ENCODE measurements at regions of chr14 and their contacts with region 1.

Region 1: DNA sequence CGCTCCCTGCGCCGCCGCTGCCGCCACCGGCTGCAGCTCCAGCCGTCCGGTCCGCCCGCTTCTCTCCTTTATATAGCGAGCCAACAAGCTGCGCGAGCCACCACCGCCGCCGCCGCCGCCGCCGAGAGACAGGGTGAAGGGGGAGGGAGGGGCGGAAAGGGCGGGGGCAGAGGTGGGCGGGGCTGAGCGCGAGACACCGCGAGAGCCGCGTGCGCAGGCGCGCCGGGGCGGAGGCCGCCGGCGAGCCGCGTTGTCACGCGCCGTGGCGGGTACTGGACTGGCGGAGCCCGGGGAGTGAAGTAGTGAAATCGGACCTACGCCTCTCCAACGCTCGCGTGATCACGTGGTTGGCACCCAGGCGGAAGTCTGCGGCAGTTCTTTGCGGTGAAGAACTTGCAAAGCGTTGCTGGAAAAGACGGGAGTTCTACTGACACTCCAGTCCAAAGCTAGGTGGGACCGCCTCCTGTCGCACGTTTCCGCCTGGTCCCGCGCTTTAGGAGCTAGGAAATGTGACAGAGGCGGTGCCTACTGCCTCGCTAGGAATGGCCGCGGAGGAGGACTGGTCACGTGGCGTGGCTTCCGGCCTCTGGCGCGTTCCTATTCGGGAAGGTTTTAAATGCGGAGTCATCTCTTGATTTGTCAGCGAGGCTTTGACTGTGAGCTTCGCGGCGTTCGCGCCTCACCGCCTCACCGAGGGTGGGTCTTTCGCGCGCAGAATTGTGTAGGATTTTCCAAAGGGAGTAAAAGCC is at the start of gene GTF2A1:
- DNase-seq: peak; percentile 97
- H3K4me3 ChIP-seq: peak within 1 kb of the TSS; percentile 84 to 99 (median 98)
- H3K27ac ChIP-seq: peak within 1 kb of the TSS; percentile 96
- H3K4me1 ChIP-seq: peaks cover 18% of the 10 kb centered on the region
- H3K27me3 ChIP-seq: no peaks in the 10 kb centered on the region
- CTCF ChIP-seq: no peak
- POLR2A ChIP-seq: peak; percentile 99
- total RNA-seq, gene GTF2A1: 32.1 and 33.4 TPM in 2 replicates

Region 2: DNA sequence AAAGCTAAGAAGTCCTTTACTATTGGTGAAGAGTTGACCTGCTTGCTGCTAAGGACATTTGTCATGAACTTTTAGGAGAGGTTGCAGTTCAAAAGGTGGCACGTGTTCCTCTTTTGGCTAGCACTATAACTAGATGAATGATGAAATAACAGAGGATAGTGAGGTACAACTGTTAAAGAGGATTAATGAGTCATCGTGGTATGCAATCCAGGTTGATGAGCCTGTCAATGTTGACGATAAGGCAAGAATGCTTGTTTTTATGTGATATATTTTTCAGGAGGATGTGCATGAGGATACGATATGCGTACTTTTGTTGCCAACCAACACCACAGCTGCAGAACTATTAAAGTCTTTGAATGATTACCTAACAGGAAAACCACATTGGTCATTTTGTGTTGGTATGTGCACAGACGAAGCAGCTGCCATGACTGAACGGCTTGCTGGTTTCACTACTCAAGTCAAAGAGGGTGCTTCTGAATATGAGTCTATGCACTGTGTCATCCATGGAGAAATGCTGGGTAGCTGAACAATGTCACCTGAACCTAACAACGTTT is 290.1 kb before region 1 on chr14:
- CTCF ChIA-PET with region 1: no interaction called
- POLR2A ChIA-PET with region 1: no interaction called
- dilution Hi-C with region 1: no loop called
- intact Hi-C with region 1: no loop called
- DNase-seq: no peak
- H3K4me3 ChIP-seq: no peak overlapping the region
- H3K27ac ChIP-seq: no peak overlapping the region
- H3K4me1 ChIP-seq: no peaks in the 10 kb centered on the region
- H3K27me3 ChIP-seq: no peaks in the 10 kb centered on the region
- CTCF ChIP-seq: no peak
- POLR2A ChIP-seq: no peak

Region 3: DNA sequence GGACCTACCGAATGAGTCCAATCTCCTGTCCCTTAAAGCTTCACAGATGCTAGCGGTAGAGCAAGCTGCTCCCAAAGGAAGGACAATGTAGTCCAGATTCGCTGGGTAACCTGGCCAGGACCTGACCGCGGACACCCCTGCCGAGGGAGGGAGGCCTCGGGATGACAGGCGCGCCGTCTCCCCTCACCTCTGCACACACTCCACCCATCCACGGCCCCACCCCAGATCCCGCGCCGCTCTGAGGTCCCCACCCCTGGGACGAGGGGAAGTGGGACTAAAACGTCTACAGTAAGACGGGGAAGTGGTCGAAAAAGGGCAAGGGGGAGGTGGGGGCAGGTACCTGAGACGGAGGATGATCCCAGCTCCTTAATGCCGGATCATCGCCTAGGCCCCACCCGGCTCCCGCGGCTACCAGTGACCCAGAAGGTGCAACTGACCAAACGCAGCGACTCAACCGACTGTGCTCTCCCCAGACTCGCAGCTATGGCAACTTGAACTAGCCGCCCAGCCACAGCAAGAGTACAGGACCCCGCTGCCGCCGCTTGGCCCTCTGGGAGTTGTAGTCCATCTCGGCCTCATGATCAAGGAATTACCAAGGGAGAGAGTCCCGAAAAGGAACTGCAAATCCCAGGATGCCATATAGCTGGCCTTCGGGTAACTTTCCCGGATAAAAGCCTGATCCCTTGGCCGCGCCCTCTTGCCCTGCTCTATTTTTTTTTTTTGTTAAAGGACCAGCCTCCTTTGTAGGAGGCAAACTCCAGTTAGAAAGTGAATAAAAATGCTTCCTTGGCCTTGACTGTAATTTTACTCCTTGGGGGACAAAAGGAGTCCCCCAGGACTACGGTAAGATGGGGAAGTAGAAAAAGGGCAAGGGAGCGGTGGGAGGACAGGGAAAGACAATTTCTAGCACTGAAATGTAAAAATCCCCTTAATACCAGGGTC is 279.5 kb before region 1 on chr14 and contains the start of gene CEP128:
- CTCF ChIA-PET with region 1: no interaction called
- POLR2A ChIA-PET with region 1: interaction called, 7 read pairs
- dilution Hi-C with region 1: no loop called
- intact Hi-C with region 1: loop called (anchors 5 kb)
- DNase-seq: peak; percentile 98
- H3K4me3 ChIP-seq: peak within 1 kb of the TSS; percentile 25 to 75 (median 74)
- H3K27ac ChIP-seq: peak within 1 kb of the TSS; percentile 26
- H3K4me1 ChIP-seq: peaks cover 7% of the 10 kb centered on the region
- H3K27me3 ChIP-seq: no peaks in the 10 kb centered on the region
- CTCF ChIP-seq: no peak
- POLR2A ChIP-seq: no peak
- total RNA-seq, gene CEP128: 22.9 and 23.7 TPM in 2 replicates

Region 4: GRCh38 chr14:81198651-81199050 is 22.4 kb before region 1 on chr14:
- CTCF ChIA-PET with region 1: interaction called, 3 read pairs
- POLR2A ChIA-PET with region 1: interaction called, 5 read pairs
- dilution Hi-C with region 1: no loop called
- intact Hi-C with region 1: loop called (anchors 2 kb)
- DNase-seq: no peak
- H3K4me3 ChIP-seq: no peak overlapping the region
- H3K27ac ChIP-seq: no peak overlapping the region
- H3K4me1 ChIP-seq: no peaks in the 10 kb centered on the region
- H3K27me3 ChIP-seq: no peaks in the 10 kb centered on the region
- CTCF ChIP-seq: no peak
- POLR2A ChIP-seq: no peak

Region 5: GRCh38 chr14:81436296-81437138 is 215.5 kb after region 1 on chr14:
- CTCF ChIA-PET with region 1: no interaction called
- POLR2A ChIA-PET with region 1: no interaction called
- dilution Hi-C with region 1: no loop called
- intact Hi-C with region 1: loop called (anchors 5 kb)
- DNase-seq: peak; percentile 56
- H3K4me3 ChIP-seq: peak overlapping the region in 2 of 3 experiments; percentile 23 to 28
- H3K27ac ChIP-seq: no peak overlapping the region
- H3K4me1 ChIP-seq: peaks cover 5% of the 10 kb centered on the region
- H3K27me3 ChIP-seq: peaks cover 34 to 36% of the 10 kb centered on the region in 2 experiments
- CTCF ChIP-seq: no peak
- POLR2A ChIP-seq: no peak

Region 6: DNA sequence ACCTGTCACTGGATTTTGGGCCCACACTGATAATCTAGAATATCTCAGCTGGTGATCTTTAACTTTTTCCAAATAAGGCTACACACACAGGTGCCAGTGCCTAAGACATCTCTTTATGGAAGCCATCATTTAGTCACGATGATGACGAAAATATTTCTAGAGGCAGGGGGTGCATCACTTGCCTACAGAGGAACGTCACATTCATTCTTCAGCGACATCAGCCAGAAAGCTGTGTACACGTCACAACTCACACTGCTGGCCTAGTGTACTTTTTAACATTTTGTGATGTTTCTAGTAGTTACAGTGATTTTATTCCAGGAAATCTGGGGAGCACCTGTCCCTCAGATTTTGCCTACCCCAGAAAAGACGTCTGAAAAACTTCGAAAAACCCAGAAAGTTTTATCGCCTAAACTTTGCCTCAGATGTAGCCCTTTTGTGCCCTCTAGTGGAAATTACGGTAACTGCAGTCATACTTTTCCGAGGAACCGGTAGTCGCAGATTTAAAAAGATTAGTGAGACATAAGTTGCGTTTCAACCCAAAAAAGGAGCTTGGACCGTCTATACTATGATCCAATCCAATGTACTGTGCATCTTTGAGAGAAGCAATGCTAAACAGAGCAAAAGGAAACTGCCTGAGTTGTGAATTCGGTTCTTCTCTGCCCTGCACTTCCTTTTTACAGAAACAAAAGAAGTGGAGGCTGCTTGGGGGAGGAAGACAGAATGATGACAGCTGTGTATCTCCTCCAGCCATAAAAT is 243.4 kb after region 1 on chr14:
- CTCF ChIA-PET with region 1: interaction called, 4 read pairs
- POLR2A ChIA-PET with region 1: interaction called, 4 read pairs
- dilution Hi-C with region 1: no loop called
- intact Hi-C with region 1: loop called (anchors 1 kb)
- DNase-seq: peak; percentile 79
- H3K4me3 ChIP-seq: peak overlapping the region; percentile 38 to 86 (median 41)
- H3K27ac ChIP-seq: no peak overlapping the region
- H3K4me1 ChIP-seq: no peaks in the 10 kb centered on the region
- H3K27me3 ChIP-seq: no peaks in the 10 kb centered on the region
- CTCF ChIP-seq: peak; percentile 68 to 82
- POLR2A ChIP-seq: no peak

Region 7: GRCh38 chr14:81533536-81534343 is 312.7 kb after region 1 on chr14 and contains the start of gene SEL1L:
- CTCF ChIA-PET with region 1: no interaction called
- POLR2A ChIA-PET with region 1: interaction called, 4 read pairs
- dilution Hi-C with region 1: no loop called
- intact Hi-C with region 1: loop called (anchors 1 kb)
- DNase-seq: peak; percentile 100
- H3K4me3 ChIP-seq: peak within 1 kb of the TSS; percentile 54 to 84 (median 72)
- H3K27ac ChIP-seq: peak within 1 kb of the TSS; percentile 39
- H3K4me1 ChIP-seq: peaks cover 7% of the 10 kb centered on the region
- H3K27me3 ChIP-seq: no peaks in the 10 kb centered on the region
- CTCF ChIP-seq: no peak
- POLR2A ChIP-seq: peak; percentile 73
- total RNA-seq, gene SEL1L: 94.5 and 95.0 TPM in 2 replicates

Measured in endothelial cell of umbilical vein (primary cell).